ENCODE measurements at regions of chr15 and their contacts with region 1.

Region 1: GRCh38 chr15:52735231-52736089 is 54.7 kb downstream of the ONECUT1 start:
- DNase-seq: no peak
- ATAC-seq: peak; percentile 84
- H3K4me3 Mint-ChIP-seq: no peak overlapping the region
- H3K27ac Mint-ChIP-seq: no peak overlapping the region
- H3K4me1 Mint-ChIP-seq: peaks cover 18% of the 10 kb centered on the region
- H3K27me3 Mint-ChIP-seq: no peaks in the 10 kb centered on the region
- CTCF ChIP-seq: no peak

Region 2: DNA sequence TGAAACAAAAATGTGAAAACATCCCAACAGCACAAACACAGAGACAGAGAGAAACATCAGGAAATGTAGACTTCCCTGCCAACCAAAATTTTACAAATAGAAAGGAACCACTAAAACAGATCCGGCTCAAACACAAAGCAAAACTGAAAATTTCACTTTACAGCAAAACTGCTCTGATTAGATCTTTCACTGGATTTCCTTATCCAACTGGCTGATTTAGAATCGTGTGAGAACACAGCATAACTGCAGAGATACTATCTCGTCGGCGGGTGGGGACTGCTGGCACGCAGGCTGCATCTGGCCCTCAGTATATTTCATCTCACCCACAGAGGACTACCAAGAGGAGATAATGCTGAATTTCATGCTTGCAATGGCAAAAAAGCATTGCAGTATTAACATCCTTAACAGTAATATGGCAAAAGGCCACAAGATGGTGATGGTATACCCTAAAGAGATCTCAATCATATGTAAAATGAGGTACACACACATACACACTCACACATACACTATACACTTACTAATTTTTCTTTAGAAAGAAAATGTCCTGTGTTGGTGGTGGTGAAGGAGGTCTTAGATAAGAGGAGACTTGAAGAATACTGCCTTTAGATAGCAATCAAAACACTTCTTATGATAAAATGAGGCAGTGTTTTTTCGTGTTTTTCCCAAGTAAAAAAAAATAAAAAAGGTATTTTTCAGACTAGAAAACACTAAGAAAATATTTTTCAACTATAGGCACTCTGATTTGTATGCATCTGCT is 753.3 kb before region 1 on chr15:
- CTCF ChIA-PET with region 1: no interaction called
- POLR2A ChIA-PET with region 1: no interaction called
- intact Hi-C with region 1: loop called (anchors 2 kb)
- DNase-seq: no peak
- ATAC-seq: peak; percentile 90
- H3K4me3 Mint-ChIP-seq: peak overlapping the region; percentile 57
- H3K27ac Mint-ChIP-seq: no peak overlapping the region
- H3K4me1 Mint-ChIP-seq: peaks cover 9% of the 10 kb centered on the region
- H3K27me3 Mint-ChIP-seq: no peaks in the 10 kb centered on the region
- CTCF ChIP-seq: no peak

Region 3: GRCh38 chr15:52078876-52079700 is 656.4 kb before region 1 on chr15:
- CTCF ChIA-PET with region 1: no interaction called
- POLR2A ChIA-PET with region 1: no interaction called
- intact Hi-C with region 1: loop called (anchors 1 kb)
- DNase-seq: peak; percentile 60
- ATAC-seq: peak; percentile 68
- H3K4me3 Mint-ChIP-seq: no peak overlapping the region
- H3K27ac Mint-ChIP-seq: no peak overlapping the region
- H3K4me1 Mint-ChIP-seq: peaks cover 23% of the 10 kb centered on the region
- H3K27me3 Mint-ChIP-seq: no peaks in the 10 kb centered on the region
- CTCF ChIP-seq: peak; percentile 76

Region 4: DNA sequence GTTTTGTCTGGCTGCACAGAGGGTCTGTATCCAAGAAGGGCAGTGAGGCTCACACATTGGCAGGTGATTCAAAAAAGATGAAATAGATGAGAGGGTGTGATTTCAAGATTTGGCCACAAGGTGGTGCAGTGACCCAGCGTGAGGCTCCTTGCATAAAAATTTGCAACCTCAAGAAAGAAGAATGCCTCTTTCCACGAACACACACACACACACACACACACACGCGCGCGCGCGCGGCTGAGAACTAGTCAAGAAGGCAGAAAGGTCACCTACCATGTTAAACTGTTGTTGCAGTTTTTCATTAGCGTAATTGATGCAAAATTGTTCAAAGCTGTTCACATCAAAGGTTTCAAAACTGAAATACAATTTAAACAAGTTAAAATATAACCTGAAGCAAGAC is 479.1 kb before region 1 on chr15:
- CTCF ChIA-PET with region 1: interaction called, 60 read pairs
- POLR2A ChIA-PET with region 1: interaction called, 4 read pairs
- intact Hi-C with region 1: loop called (anchors 1 kb)
- DNase-seq: peak; percentile 46
- ATAC-seq: peak; percentile 78
- H3K4me3 Mint-ChIP-seq: peak overlapping the region; percentile 60
- H3K27ac Mint-ChIP-seq: peak overlapping the region; percentile 68
- H3K4me1 Mint-ChIP-seq: peaks cover 48% of the 10 kb centered on the region
- H3K27me3 Mint-ChIP-seq: no peaks in the 10 kb centered on the region
- CTCF ChIP-seq: no peak

Region 5: DNA sequence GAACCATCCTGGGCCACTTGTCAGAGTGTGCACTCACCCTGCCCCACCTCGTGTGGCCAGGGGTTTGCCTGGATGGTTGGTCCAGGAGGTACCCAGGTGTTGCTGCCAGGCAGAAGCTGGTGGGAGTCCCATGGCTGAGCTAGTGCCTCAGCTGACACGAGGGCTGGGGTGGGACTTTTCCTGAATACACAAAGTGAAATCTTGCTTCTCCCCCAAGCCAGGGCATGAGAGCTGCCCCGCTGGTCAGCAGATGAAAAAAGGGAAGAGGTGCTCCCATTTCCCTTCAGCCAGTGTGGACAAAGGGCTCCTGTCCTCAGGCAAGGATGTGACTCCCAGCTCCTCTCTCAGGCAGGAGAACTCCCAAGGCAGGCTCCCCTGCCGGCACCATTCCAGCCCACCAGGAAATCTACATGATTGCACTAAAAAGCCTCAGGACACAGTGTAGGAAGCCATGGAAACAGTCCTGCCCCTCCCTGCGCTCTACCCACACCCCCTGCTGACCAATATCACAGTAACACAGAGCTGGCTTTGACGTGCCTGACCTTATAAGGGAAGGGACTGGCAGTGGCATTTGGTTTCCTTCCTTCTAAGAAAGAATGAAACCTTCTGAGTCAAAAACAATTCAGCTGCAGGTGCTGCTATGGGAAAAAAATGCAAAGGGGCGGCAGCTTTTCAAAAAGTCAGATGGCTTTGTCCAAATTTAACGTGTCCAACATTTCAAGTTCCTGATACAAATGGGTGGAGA is 473.8 kb before region 1 on chr15:
- CTCF ChIA-PET with region 1: interaction called, 60 read pairs
- POLR2A ChIA-PET with region 1: interaction called, 4 read pairs
- intact Hi-C with region 1: loop called (anchors 1 kb)
- DNase-seq: peak; percentile 36
- ATAC-seq: peak; percentile 100
- H3K4me3 Mint-ChIP-seq: peak overlapping the region; percentile 71
- H3K27ac Mint-ChIP-seq: peak overlapping the region; percentile 94
- H3K4me1 Mint-ChIP-seq: peaks cover 39% of the 10 kb centered on the region
- H3K27me3 Mint-ChIP-seq: no peaks in the 10 kb centered on the region
- CTCF ChIP-seq: no peak

Region 6: GRCh38 chr15:52331490-52332240 is 403.8 kb before region 1 on chr15:
- CTCF ChIA-PET with region 1: interaction called, 31 read pairs
- POLR2A ChIA-PET with region 1: interaction called, 5 read pairs
- intact Hi-C with region 1: loop called (anchors 1 kb)
- DNase-seq: no peak
- ATAC-seq: peak; percentile 99
- H3K4me3 Mint-ChIP-seq: no peak overlapping the region
- H3K27ac Mint-ChIP-seq: peak overlapping the region; percentile 15
- H3K4me1 Mint-ChIP-seq: peaks cover 13% of the 10 kb centered on the region
- H3K27me3 Mint-ChIP-seq: no peaks in the 10 kb centered on the region
- CTCF ChIP-seq: no peak

Region 7: DNA sequence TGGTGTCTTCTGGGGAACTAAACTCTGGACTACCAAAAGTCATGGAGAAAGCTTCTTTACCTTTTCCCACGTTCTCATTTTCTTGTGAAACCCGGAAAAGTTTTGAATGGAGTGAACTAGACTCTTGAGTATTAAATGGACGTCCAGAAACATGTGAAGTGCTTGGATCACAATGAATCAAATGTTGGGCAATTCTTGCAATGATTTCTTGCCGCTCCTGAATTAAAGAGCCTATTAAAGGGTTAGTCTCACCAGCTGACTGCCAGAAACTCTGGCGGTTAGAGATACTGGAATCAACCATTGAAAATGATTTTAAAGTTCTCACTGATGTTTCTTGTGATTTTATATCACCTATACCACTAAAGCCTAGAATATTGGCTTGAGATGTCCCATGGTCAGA is 125.9 kb before region 1 on chr15:
- CTCF ChIA-PET with region 1: interaction called, 4 read pairs
- POLR2A ChIA-PET with region 1: no interaction called
- intact Hi-C with region 1: loop called (anchors 1 kb)
- DNase-seq: no peak
- ATAC-seq: no peak
- H3K4me3 Mint-ChIP-seq: no peak overlapping the region
- H3K27ac Mint-ChIP-seq: no peak overlapping the region
- H3K4me1 Mint-ChIP-seq: peaks cover 20% of the 10 kb centered on the region
- H3K27me3 Mint-ChIP-seq: no peaks in the 10 kb centered on the region
- CTCF ChIP-seq: no peak

Region 8: DNA sequence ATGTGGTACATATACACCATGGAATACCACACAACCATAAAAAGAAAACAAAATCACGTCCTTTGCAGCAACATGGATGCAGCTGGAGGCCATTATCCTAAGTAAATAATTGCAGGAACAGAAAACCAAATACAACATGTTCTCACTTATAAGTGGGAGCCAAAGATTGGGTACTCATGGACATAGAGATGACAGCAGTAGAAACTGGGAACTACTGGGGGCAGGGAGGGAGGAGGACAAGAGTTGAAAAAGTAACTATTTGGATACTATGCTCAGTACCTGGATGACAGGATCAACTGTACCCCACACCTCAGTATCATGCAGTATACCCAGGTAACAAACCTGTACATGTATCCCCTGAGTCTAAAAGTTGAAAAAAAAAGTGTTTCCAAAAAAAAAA is 33.1 kb before region 1 on chr15:
- CTCF ChIA-PET with region 1: no interaction called
- POLR2A ChIA-PET with region 1: no interaction called
- intact Hi-C with region 1: no loop called
- DNase-seq: no peak
- ATAC-seq: no peak
- H3K4me3 Mint-ChIP-seq: no peak overlapping the region
- H3K27ac Mint-ChIP-seq: no peak overlapping the region
- H3K4me1 Mint-ChIP-seq: peaks cover 61% of the 10 kb centered on the region
- H3K27me3 Mint-ChIP-seq: no peaks in the 10 kb centered on the region
- CTCF ChIP-seq: no peak